Dendritic cell treated with granulocyte-macrophage colony-stimulating factor and Interleukin-4, amounts not matched to agents 40 ng/mL and 50 ng/mL, for 4 days (primary cell): ENCODE measurements at regions of chr1 and their contacts with region 1.

Region 1: GRCh38 chr1:157105988-157106812 is 6.6 kb upstream of the ETV3L start:
- H3K4me3 Mint-ChIP-seq: peak overlapping the region; percentile 44
- H3K27ac Mint-ChIP-seq: peak overlapping the region; percentile 90
- H3K4me1 Mint-ChIP-seq: peaks cover 89% of the 10 kb centered on the region
- H3K27me3 Mint-ChIP-seq: peaks cover 19% of the 10 kb centered on the region

Region 2: GRCh38 chr1:157138220-157139051 is 32.2 kb after region 1 on chr1 and contains the start of gene ETV3:
- intact Hi-C with region 1: loop called (anchors 1 kb)
- H3K4me3 Mint-ChIP-seq: peak within 1 kb of the TSS; percentile 95
- H3K27ac Mint-ChIP-seq: peak within 1 kb of the TSS; percentile 94
- H3K4me1 Mint-ChIP-seq: peaks cover 62% of the 10 kb centered on the region
- H3K27me3 Mint-ChIP-seq: no peaks in the 10 kb centered on the region